GM13976 (cell line): ENCODE measurements at regions of chr13 and their contacts with region 1.

Region 1: DNA sequence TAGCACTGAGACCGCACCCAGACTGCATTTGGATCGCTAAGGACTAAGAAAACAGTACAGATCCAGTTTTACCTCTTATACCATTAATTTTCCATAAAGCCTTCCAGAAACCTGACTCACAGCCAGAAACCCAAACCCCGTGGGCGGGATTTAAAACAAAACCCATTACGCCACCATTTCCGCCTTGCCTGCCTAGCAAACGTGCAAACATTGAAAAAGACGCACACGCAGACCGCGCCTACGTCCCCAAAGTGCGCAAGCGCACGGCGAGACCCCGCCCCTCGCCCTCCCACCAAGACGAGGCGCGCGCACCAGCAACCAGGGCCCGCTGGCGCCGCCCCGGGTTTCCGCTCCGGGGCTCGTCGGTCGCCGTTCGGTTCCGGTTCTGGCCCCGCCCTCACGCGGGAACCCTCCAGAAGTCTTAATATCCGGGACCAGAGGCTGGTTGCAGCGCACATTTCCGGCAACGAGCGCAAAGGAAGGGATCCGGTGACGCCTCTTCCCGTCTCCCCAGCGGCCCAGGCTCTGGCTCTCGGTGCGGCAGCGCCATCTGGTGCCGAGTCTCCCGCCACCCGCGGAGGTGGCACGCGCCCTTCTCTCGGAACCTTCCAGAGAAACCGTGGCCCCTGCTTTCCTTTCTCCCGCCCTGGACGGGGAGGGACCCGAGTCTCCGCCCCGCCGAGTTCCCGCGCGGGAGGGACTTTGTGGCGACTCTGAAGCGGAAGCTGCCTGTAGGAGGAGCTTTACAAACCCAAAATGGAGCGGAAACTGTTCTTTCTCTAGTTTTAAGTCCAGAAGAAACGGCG is 256.9 kb upstream of the STARD13 start:
- DNase-seq: peak; percentile 91
- CTCF ChIP-seq: peak; percentile 92

Region 2: DNA sequence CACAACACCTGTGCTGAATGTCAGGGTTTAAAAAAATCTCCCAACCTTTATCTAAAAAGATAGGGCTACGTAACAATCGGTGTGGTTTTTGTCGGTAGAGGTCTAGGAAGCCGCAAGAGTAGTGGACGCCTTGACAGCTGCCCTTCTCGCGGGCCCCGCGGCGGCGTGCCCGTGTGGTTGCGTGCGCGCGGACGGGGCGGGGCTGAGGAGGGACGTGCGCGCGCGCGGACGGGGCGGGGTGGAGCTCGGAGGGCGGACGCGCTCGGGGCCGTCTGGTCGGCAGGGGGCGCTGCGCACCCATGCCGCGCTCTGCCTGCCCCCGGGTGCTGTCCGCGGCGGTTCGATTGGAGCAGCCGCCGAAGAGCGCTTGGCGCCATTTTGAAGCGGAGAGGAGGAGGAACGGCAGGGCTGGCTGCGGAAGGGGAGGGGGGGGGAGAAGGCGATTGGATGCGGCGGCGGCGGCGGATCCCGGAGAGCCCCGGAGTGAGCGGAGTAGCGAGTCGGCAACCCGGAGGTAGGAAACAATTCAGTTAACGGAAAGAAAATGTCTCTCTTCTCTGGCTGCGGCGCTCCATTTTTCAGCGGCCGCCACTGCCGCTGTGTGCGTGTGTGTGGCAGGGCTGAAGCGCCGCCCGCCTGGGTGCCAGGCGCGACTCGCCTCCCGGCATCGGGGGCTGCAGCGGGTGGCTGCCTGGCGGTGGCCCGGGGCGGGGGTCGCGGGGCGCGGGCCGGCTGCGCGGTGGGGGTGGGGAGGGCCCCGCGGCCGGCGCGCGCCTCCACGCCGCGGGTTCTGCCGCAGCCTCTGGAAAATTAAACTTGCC is 956.2 kb before region 1 on chr13 and contains the start of gene PDS5B:
- in situ Hi-C with region 1: loop called (anchors 25 kb)
- DNase-seq: peak; percentile 94
- CTCF ChIP-seq: peak; percentile 95

Region 3: DNA sequence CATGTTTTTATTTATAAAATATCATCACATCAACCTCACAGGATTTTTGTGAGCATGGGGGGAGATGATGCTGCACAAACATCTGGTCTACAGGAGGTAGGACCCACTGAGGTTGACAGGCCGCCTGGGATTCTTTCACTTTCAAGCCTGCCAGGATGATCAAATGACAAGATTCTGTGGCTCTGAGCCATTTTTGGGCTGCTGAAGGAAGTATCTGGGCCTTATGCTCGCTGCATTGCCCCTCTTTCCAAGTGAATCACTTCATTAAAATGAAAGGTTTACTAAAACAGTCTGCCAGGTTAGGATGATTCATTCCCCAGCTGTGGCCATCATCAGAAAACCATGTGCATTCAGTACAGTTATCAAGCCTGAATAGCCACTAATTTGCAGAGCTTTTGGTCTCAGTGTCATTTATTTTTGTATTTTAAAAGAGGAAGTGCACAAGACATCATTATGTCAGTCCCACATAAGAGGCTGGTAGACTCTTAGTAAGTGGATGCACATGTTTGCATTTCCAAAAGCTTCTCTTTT is 291.3 kb before region 1 on chr13:
- in situ Hi-C with region 1: no loop called
- DNase-seq: peak; percentile 44
- CTCF ChIP-seq: no peak

Region 4: DNA sequence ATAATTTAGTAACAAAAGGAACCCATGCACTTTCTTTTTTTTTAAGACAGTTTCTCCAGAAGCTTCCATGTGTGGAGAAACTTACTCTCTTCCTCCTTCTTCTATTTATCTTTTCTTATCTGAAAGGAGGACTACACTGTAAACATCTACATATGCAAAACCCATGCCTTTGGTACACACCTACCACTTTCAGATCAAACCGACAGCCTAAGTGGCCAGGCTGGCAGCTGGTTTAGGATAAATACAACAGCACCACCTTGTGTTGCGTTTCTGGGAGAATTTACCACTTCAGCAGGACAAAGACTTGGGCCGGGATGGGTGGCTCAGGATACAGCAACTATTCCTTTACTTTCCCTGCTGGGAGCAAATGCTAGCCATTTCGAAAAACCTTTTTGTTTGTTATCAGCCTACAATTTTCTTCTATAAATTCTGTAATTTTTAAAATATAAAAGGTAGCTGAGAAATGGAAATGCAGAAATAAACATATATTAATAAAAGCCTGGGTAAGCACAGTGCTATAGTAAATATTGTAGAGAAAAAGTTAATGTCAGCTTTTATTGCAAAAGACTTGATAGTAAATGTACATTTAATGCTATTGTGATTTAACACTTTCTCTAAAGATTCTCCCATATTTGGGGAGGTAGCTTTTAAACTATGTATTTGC is 181.4 kb after region 1 on chr13:
- in situ Hi-C with region 1: loop called (anchors 10 kb)
- DNase-seq: peak; percentile 48
- CTCF ChIP-seq: peak; percentile 63

Region 5: DNA sequence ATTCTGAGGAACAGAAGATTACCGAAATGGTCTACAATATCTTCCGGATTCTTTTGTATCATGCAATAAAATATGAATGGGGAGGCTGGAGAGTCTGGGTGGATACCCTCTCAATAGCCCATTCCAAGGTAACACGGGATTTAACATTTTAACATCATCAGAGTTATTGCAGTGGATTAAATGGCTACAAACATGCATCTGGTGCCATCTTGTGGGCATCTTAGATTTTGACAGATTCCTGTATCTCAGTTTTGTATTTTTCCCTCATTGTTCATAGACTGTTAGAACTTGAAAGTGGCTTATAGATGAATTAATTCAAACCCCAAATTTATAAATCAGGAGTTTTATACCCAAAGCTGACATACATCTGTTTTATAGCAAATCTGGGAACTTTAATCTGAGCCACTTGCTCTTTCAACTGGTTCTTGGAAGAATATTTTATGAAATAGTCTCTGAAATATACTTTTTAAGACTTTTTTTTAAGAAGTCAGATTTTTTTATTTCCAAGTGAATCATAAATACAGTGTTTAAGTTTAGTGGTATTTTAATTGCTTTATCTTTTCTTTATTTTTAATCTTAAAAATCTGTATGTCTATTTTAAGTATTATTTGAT is 1614.8 kb after region 1 on chr13:
- in situ Hi-C with region 1: loop called (anchors 25 kb)
- DNase-seq: peak; percentile 34
- CTCF ChIP-seq: peak; percentile 21